ENCODE measurements at regions of chr3 and their contacts with region 1.

Region 1: DNA sequence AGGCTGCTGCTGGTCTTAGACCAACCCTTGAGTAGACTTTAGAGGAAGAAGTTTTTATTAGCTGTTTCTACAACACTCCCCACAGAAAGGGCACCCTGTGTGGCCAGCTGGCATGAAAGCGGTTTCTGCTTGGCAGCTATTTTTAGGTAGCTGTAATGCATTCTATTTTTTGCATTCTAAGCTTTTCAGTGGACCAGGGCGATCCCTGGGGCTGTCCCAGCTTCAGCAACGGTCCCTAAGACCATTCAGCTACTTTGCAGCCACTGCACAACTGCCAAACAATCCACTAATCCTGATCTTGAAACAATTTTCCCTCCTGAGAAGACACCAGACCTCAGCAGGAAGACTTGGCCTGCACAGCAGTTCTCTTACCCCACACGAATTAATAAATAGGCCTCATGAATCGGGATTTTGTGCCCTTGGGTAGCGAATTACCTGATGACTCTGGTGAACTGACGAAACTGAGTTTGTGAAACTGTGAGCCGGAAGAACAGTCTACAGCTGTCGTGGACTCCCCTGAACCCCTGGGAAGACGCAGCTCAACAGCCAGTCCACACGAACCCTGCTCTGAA is 14.6 kb upstream of the TFRC start:
- DNase-seq: no peak
- H3K4me3 Mint-ChIP-seq: no peak overlapping the region
- H3K27ac Mint-ChIP-seq: no peak overlapping the region
- H3K4me1 Mint-ChIP-seq: peaks cover 6% of the 10 kb centered on the region
- H3K27me3 Mint-ChIP-seq: no peaks in the 10 kb centered on the region

Region 2: GRCh38 chr3:195760345-195761122 is 335.9 kb before region 1 on chr3:
- CTCF ChIA-PET with region 1: no interaction called
- POLR2A ChIA-PET with region 1: no interaction called
- DNase-seq: no peak
- H3K4me3 Mint-ChIP-seq: no peak overlapping the region
- H3K27ac Mint-ChIP-seq: no peak overlapping the region
- H3K4me1 Mint-ChIP-seq: peaks cover 15% of the 10 kb centered on the region
- H3K27me3 Mint-ChIP-seq: peaks cover 39% of the 10 kb centered on the region

Region 3: GRCh38 chr3:196108083-196108743 is 11.7 kb after region 1 on chr3:
- CTCF ChIA-PET with region 1: interaction called, 10 read pairs
- POLR2A ChIA-PET with region 1: no interaction called
- DNase-seq: no peak
- H3K4me3 Mint-ChIP-seq: no peak overlapping the region
- H3K27ac Mint-ChIP-seq: no peak overlapping the region
- H3K4me1 Mint-ChIP-seq: peaks cover 22% of the 10 kb centered on the region
- H3K27me3 Mint-ChIP-seq: no peaks in the 10 kb centered on the region

Measured in activated CD4-positive, alpha-beta T cell treated with anti-CD3 and anti-CD28 coated beads, Interleukin-2, amount 10 ng/mL, durations not matched to agents 7 days and 5 days (primary cell).